ENCODE measurements at regions of chr10 and their contacts with region 1.

Region 1: GRCh38 chr10:48656241-48656913 is 28.3 kb upstream of the WDFY4 start:
- DNase-seq: peak; percentile 91
- ATAC-seq: peak; percentile 98
- H3K4me3 Mint-ChIP-seq: peak overlapping the region; percentile 70
- H3K27ac Mint-ChIP-seq: peak overlapping the region; percentile 42
- H3K4me1 Mint-ChIP-seq: peaks cover 14% of the 10 kb centered on the region
- H3K27me3 Mint-ChIP-seq: peaks cover 39% of the 10 kb centered on the region

Region 2: DNA sequence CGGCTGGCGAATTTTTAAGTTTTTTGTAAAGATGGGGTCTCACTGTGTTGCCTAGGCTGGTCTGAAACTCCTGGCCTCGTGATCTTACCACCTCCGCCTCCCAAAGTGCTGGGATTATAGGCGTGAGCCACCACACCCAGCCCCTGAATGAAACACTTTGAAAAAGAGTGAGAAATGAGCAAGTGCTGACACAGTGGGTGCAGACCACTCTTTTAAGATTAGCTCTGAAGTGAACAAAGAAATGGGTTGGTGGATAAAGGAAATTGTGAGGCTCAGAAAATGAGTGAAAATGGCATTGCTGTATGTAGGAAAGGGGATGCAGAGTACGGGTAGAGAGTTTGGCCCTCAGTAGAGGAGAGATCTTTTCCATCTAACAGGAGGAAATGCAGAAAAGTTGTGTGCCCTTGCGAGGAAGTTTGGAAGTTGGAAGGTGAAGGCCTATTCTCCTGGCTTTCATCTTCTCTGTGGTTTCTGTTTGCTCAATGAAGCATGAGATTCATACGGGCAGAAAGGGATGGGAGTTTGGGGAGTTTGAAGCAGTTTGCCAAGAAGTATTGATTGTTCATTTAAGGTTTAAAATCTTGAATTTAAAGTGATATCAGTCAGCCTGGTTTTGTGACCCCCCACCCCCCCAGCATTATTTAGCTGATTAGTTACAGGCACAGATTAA is 338.9 kb before region 1 on chr10:
- CTCF ChIA-PET with region 1: no interaction called
- POLR2A ChIA-PET with region 1: no interaction called
- DNase-seq: no peak
- ATAC-seq: no peak
- H3K4me3 Mint-ChIP-seq: no peak overlapping the region
- H3K27ac Mint-ChIP-seq: no peak overlapping the region
- H3K4me1 Mint-ChIP-seq: peaks cover 6% of the 10 kb centered on the region
- H3K27me3 Mint-ChIP-seq: no peaks in the 10 kb centered on the region

Region 3: DNA sequence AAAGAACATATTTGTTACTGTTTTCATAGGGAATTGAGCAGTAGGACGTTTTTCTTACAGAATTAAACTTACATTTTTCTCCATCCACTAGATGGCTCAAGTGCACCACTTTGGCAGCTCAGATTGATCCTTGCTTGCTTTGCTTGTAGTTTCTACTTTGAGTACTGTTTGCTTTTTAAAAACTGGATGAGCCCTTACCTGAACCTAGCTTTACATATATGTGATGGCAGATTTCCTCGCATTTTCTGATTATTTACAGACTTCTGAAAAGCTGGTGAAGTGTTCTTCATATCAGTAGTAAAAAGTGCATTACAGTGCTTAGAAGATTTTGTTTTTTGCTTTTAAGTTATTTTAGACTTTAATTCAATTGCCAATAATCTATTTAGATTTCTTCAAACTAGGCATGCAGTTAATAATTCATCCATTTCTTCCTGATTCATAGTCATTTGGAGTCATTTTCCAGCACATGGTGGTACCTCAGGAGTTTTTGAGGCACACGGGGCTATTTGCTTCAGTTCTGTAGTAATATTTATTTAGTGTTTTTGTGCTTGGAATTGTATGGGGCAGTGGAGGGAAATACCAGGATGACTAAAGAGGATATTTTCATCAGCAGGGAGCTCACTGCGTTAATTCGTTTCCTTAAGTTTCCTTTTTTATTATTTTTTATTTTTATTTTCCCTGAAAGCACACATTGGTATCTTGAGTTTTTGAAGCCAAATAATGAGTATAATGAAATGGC is 292.6 kb before region 1 on chr10:
- CTCF ChIA-PET with region 1: interaction called, 87 read pairs
- POLR2A ChIA-PET with region 1: no interaction called
- DNase-seq: peak; percentile 59
- ATAC-seq: no peak
- H3K4me3 Mint-ChIP-seq: no peak overlapping the region
- H3K27ac Mint-ChIP-seq: no peak overlapping the region
- H3K4me1 Mint-ChIP-seq: peaks cover 3% of the 10 kb centered on the region
- H3K27me3 Mint-ChIP-seq: no peaks in the 10 kb centered on the region

Region 4: DNA sequence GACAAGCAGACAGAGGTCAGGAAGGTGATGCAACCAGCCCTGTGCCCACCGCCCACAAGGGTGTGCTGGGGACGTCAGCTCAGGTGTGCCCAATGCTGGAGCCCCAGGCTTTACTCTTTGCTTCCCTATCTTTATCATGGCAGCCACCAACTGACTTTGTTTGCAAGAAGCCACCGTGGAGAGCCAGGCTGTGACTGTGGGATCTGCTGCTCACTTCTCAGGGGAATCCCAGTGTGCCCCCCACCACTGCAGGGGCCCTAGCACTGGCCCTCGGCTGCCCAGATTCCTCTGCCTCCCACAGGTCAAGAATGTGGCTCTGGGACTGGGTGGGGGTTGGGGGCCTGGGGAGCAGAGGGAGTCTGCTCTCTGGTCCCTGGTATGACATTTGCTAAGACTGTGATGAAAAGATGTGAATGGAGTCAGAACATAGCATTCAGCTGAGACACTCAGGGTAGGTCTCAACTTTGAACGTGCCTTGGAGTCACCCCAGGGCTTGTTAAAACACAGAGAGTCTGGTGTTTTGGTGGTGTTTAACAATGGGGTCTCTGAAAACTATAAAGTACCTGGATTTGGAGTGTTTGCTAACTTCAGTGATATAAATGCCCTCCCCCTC is 98.8 kb before region 1 on chr10:
- CTCF ChIA-PET with region 1: interaction called, 84 read pairs
- POLR2A ChIA-PET with region 1: no interaction called
- DNase-seq: no peak
- ATAC-seq: no peak
- H3K4me3 Mint-ChIP-seq: no peak overlapping the region
- H3K27ac Mint-ChIP-seq: no peak overlapping the region
- H3K4me1 Mint-ChIP-seq: no peaks in the 10 kb centered on the region
- H3K27me3 Mint-ChIP-seq: peaks cover 10% of the 10 kb centered on the region

Region 5: GRCh38 chr10:48614481-48615390 is 41.6 kb before region 1 on chr10:
- CTCF ChIA-PET with region 1: interaction called, 68 read pairs
- POLR2A ChIA-PET with region 1: no interaction called
- DNase-seq: no peak
- ATAC-seq: no peak
- H3K4me3 Mint-ChIP-seq: no peak overlapping the region
- H3K27ac Mint-ChIP-seq: no peak overlapping the region
- H3K4me1 Mint-ChIP-seq: no peaks in the 10 kb centered on the region
- H3K27me3 Mint-ChIP-seq: peaks cover 34% of the 10 kb centered on the region

Region 6: GRCh38 chr10:48802611-48803071 is 146.3 kb after region 1 on chr10:
- CTCF ChIA-PET with region 1: interaction called, 12 read pairs
- POLR2A ChIA-PET with region 1: no interaction called
- DNase-seq: no peak
- ATAC-seq: peak; percentile 18
- H3K4me3 Mint-ChIP-seq: no peak overlapping the region
- H3K27ac Mint-ChIP-seq: peak overlapping the region; percentile 68
- H3K4me1 Mint-ChIP-seq: peaks cover 70% of the 10 kb centered on the region
- H3K27me3 Mint-ChIP-seq: no peaks in the 10 kb centered on the region

Region 7: GRCh38 chr10:49512121-49512809 is 855.9 kb after region 1 on chr10:
- CTCF ChIA-PET with region 1: interaction called, 19 read pairs
- POLR2A ChIA-PET with region 1: no interaction called
- DNase-seq: peak; percentile 47
- ATAC-seq: peak; percentile 51
- H3K4me3 Mint-ChIP-seq: no peak overlapping the region
- H3K27ac Mint-ChIP-seq: no peak overlapping the region
- H3K4me1 Mint-ChIP-seq: peaks cover 26% of the 10 kb centered on the region
- H3K27me3 Mint-ChIP-seq: peaks cover 4% of the 10 kb centered on the region

Measured in activated CD8-positive, alpha-beta T cell treated with anti-CD3 and anti-CD28 coated beads, Interleukin-2, amount 10 ng/mL, durations not matched to agents 7 days and 5 days (primary cell).